H1 (cell line): ENCODE measurements at regions of chr3 and their contacts with region 1.

Region 1: GRCh38 chr3:167669699-167670098 is 16.0 kb upstream of the WDR49 start:
- DNase-seq: no peak
- H3K4me3 ChIP-seq: no peak overlapping the region
- H3K27ac ChIP-seq: no peak overlapping the region
- H3K4me1 ChIP-seq: no peaks in the 10 kb centered on the region
- H3K27me3 ChIP-seq: no peaks in the 10 kb centered on the region
- CTCF ChIP-seq: no peak
- EP300 ChIP-seq: no peak
- POLR2A ChIP-seq: no peak
- RAD21 ChIP-seq: no peak

Region 2: GRCh38 chr3:167653760-167654159 is 15.9 kb before region 1 on chr3 and contains the start of gene WDR49:
- CTCF ChIA-PET with region 1: interaction called, 4 read pairs
- POLR2A ChIA-PET with region 1: interaction called, 12 read pairs
- DNase-seq: peak in 1 of 2 experiments; percentile 57
- H3K4me3 ChIP-seq: peak within 1 kb of the TSS in 1 of 4 experiments; percentile 29; a peak in 1 of 8 replicates
- H3K27ac ChIP-seq: peak within 1 kb of the TSS; percentile 95
- H3K4me1 ChIP-seq: peaks cover 3 to 15% (median 10%) of the 10 kb centered on the region in 4 experiments; a peak in 5 of 7 replicates
- H3K27me3 ChIP-seq: no peaks in the 10 kb centered on the region
- CTCF ChIP-seq: no peak
- EP300 ChIP-seq: peak in 1 of 2 experiments; percentile 95; a peak in 2 of 3 replicates
- POLR2A ChIP-seq: peak; percentile 45 to 50; a peak in 2 of 3 replicates
- RAD21 ChIP-seq: 0 out of 4 replicates have a peak, but pooled peaks of 1 of the 2 experiments have one; percentile 0
- total RNA-seq, gene WDR49: 1.7 and 3.2 TPM in 2 replicates